Natural killer cell (primary cell): ENCODE measurements at regions of chr2 and their contacts with region 1.

Region 1: DNA sequence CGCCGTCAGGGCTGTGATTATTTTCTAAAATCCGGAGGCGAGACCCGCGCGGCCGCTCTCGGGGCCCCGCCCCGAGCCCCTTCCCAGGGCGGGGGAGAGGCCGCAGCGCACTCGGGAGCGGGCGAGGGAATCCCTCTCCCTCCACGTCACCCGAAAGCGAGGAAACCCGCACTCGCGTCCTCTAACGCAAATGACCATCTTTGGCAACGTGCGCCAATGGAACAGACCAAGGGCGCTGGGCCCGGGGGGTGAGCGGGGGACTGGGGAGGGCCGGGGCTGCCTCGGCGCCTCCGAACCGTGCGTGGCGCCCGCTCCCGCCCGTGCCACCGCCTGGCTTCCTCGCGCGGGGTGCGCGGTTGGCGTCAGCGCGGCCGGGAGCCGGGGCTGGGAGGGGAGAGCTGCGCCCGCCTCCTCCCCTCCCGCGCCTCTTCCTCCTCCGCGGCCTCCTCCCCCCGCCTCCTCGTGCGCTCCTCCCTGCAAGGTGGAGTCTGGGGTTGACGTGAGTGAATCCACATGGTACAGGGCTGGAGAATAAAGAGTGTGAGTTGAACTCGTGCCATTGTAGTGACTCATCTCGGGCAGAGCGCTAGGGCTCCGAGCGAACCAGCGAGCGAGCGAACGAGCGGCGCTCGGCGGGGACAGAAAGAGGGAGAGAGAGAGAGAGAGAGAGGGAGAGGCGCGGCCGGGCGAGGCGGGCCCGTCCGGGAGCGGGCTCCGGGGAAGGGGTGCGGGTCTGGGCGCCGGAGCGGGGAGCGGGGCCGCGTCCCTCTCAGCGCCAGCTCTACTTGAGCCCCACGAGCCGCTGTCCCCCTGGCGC is at the start of gene FOSL2:
- DNase-seq: peak; percentile 92 to 98
- ATAC-seq: peak; percentile 68 to 89 (median 73)
- H3K4me3 ChIP-seq: peak within 1 kb of the TSS; percentile 89
- H3K4me3 Mint-ChIP-seq: peak within 1 kb of the TSS; percentile 89
- H3K27ac ChIP-seq: peak within 1 kb of the TSS; percentile 97
- H3K27ac Mint-ChIP-seq: no peak within 1 kb of the TSS
- H3K4me1 ChIP-seq: peaks cover 36% of the 10 kb centered on the region
- H3K4me1 Mint-ChIP-seq: peaks cover 24 to 33% of the 10 kb centered on the region in 2 donors
- H3K27me3 ChIP-seq: no peaks in the 10 kb centered on the region
- H3K27me3 Mint-ChIP-seq: peaks cover 0 to 3% of the 10 kb centered on the region in 2 donors
- CTCF ChIP-seq: no peak
- total RNA-seq, gene FOSL2: 414 to 531 (median 455) TPM

Region 2: GRCh38 chr2:27890146-27890923 is 502.2 kb before region 1 on chr2 and contains the starts of genes BABAM2 and RBKS:
- intact Hi-C with region 1: loop called (anchors 1 kb)
- DNase-seq: peak; percentile 91 to 96
- ATAC-seq: peak; percentile 76 to 90 (median 78)
- H3K4me3 ChIP-seq: peak within 1 kb of the TSS; percentile 87
- H3K4me3 Mint-ChIP-seq: peak within 1 kb of the TSS; percentile 99
- H3K27ac ChIP-seq: peak within 1 kb of the TSS; percentile 100
- H3K27ac Mint-ChIP-seq: peak within 1 kb of the TSS; percentile 100
- H3K4me1 ChIP-seq: peaks cover 17% of the 10 kb centered on the region
- H3K4me1 Mint-ChIP-seq: peaks cover 30 to 41% of the 10 kb centered on the region in 2 donors
- H3K27me3 ChIP-seq: no peaks in the 10 kb centered on the region
- H3K27me3 Mint-ChIP-seq: peaks cover 0 to 4% of the 10 kb centered on the region in 2 donors
- CTCF ChIP-seq: no peak
- total RNA-seq, gene BABAM2: 54.6 to 66.1 (median 59.5) TPM
- total RNA-seq, gene RBKS: 11.5 to 20.9 (median 12.8) TPM

Region 3: DNA sequence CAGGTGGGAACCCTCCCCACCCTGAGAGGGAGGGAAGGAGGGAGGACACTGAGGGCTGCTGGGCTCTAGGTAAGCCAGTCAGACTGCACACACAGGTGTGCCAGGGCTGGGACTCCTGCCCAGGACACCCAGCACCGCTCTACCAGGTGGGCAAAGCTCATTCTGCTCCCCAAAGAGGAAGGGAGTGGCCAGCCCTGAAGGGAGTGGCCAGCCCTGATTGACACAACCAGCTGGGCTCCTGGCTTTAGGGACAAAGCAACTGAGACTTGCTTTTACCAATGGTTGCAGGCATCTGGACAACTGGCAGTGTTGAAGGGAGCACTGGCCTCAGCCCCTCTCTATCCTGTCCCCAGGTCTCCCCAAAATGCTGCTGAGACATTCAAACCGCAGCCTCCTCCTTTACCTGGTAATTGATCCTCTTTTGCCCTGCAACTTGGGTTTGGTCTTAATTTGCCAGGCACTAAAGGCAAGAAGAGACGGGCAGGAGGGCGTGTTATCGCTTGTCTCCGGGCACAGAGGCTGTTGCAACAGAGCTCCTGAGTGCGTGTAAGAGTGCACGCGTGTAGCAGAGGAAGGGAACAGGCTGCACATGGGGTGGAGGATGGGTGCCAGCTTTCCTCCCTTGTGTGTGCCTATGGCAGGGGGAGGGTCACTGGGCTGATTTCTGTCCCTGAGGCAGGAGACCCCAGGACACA is 14.4 kb before region 1 on chr2:
- intact Hi-C with region 1: loop called (anchors 2 kb)
- DNase-seq: no peak
- ATAC-seq: peak; percentile 52 to 59 (median 59)
- H3K4me3 ChIP-seq: no peak overlapping the region
- H3K4me3 Mint-ChIP-seq: peak overlapping the region; percentile 79
- H3K27ac ChIP-seq: peak overlapping the region; percentile 70
- H3K27ac Mint-ChIP-seq: peak overlapping the region; percentile 89 to 90
- H3K4me1 ChIP-seq: peaks cover 44% of the 10 kb centered on the region
- H3K4me1 Mint-ChIP-seq: peaks cover 40 to 59% of the 10 kb centered on the region in 2 donors
- H3K27me3 ChIP-seq: no peaks in the 10 kb centered on the region
- H3K27me3 Mint-ChIP-seq: no peaks in the 10 kb centered on the region
- CTCF ChIP-seq: no peak

Region 4: DNA sequence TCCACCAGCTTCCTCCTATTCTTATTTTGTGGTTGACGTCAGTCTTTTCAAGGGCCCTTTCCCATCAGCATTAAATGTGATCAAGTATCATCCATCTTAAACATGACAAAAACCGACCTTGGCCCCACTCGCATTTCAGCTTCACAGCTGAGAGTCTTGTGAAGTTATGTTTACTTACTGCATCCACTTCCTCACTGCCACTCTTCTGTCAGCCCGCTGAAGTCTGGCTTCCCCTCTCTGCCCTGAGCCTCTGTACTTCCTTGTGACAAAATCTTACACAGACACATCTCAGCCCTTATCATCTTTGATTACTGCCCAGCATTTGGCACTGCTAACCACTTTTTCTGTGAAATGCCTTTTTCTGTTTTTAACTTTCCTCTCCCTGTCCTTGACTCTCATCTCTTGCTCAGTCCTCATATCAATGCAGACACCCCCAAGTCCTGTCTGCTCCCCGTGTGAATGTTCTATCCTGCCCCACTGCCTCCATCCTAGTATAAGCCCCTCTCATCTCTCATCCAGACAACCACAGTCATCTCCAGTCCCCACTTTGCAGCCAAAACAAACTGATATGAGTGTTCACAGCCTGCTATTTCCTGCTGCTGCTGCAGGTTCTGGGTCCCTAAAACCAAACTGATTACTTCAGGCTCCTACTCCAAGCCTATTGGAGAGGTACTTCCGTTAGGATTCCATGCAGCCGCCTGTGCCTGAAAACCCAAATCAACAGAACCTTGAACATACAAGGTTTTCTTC is 31.5 kb after region 1 on chr2:
- intact Hi-C with region 1: loop called (anchors 1 kb)
- DNase-seq: peak in 1 of 2 donors; percentile 77
- ATAC-seq: peak; percentile 77 to 92 (median 82)
- H3K4me3 ChIP-seq: no peak overlapping the region
- H3K4me3 Mint-ChIP-seq: peak overlapping the region; percentile 87
- H3K27ac ChIP-seq: peak overlapping the region; percentile 95
- H3K27ac Mint-ChIP-seq: peak overlapping the region; percentile 93 to 96
- H3K4me1 ChIP-seq: peaks cover 39% of the 10 kb centered on the region
- H3K4me1 Mint-ChIP-seq: peaks cover 64 to 68% of the 10 kb centered on the region in 2 donors
- H3K27me3 ChIP-seq: no peaks in the 10 kb centered on the region
- H3K27me3 Mint-ChIP-seq: no peaks in the 10 kb centered on the region
- CTCF ChIP-seq: no peak

Region 5: GRCh38 chr2:28490558-28490957 is 98.1 kb after region 1 on chr2:
- intact Hi-C with region 1: no loop called
- DNase-seq: no peak
- ATAC-seq: no peak
- H3K4me3 ChIP-seq: no peak overlapping the region
- H3K4me3 Mint-ChIP-seq: no peak overlapping the region
- H3K27ac ChIP-seq: no peak overlapping the region
- H3K27ac Mint-ChIP-seq: no peak overlapping the region
- H3K4me1 ChIP-seq: no peaks in the 10 kb centered on the region
- H3K4me1 Mint-ChIP-seq: no peaks in the 10 kb centered on the region
- H3K27me3 ChIP-seq: no peaks in the 10 kb centered on the region
- H3K27me3 Mint-ChIP-seq: no peaks in the 10 kb centered on the region
- CTCF ChIP-seq: no peak

Region 6: DNA sequence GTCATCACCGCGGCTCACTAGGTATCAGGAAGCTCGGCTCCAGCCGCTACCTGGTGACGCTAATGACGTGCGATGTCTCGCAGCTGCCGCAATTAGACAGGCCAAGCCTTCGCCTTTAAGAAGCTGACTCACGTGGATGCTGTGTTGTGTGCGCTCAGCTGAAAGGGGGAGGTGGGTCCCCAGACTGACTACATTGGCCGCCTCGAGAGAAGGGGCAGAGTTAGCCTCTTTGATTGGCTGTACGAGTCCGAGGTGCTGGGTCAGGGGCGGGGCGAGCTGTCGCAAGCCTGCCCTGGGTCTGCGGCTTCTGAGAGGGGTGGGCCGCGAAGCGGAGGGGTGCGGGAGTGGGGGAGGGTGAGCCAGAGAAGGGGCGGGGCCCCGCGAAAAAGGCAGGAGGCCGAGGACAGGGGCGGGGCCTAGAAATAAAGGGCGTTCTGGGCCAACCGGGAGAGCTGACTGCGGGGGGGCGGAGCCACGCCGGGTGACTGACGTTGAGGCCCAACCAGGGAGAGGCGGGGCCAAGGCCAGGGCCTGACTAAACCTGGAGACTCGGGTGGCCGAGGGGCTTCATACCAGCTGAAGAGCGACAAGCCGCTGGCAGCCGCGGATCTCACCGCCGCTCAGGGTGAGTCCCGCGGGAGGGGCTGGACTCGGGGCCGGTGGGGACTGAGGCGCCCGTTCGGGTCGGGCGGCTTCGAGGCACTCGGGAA is 1754.1 kb after region 1 on chr2 and contains the start of gene YPEL5:
- intact Hi-C with region 1: loop called (anchors 10 kb)
- DNase-seq: peak; percentile 99 to 100
- ATAC-seq: peak; percentile 77 to 93 (median 81)
- H3K4me3 ChIP-seq: peak within 1 kb of the TSS; percentile 65
- H3K4me3 Mint-ChIP-seq: peak within 1 kb of the TSS; percentile 92
- H3K27ac ChIP-seq: peak within 1 kb of the TSS; percentile 96
- H3K27ac Mint-ChIP-seq: peak within 1 kb of the TSS; percentile 98
- H3K4me1 ChIP-seq: peaks cover 8% of the 10 kb centered on the region
- H3K4me1 Mint-ChIP-seq: peaks cover 43 to 46% of the 10 kb centered on the region in 2 donors
- H3K27me3 ChIP-seq: no peaks in the 10 kb centered on the region
- H3K27me3 Mint-ChIP-seq: no peaks in the 10 kb centered on the region
- CTCF ChIP-seq: no peak
- total RNA-seq, gene YPEL5: 569 to 1,094 (median 800) TPM